ENCODE measurements at regions of chr2 and their contacts with region 1.

Region 1: GRCh38 chr2:208265801-208266552 is at the start of gene PIKFYVE:
- DNase-seq: peak; percentile 81 to 96 (median 90)
- ATAC-seq: peak; percentile 89
- H3K4me3 ChIP-seq: peak within 1 kb of the TSS; percentile 96
- H3K27ac ChIP-seq: peak within 1 kb of the TSS; percentile 77
- H3K4me1 ChIP-seq: peaks cover 4 to 7% of the 10 kb centered on the region in 2 experiments; a peak in 4 of 5 replicates
- H3K27me3 ChIP-seq: no peaks in the 10 kb centered on the region
- CTCF ChIP-seq: no peak
- EP300 ChIP-seq: peak; percentile 27
- POLR2A ChIP-seq: peak; percentile 79
- RAD21 ChIP-seq: no peak
- polyA plus RNA-seq, gene PIKFYVE: 3.6 to 3.7 TPM

Region 2: DNA sequence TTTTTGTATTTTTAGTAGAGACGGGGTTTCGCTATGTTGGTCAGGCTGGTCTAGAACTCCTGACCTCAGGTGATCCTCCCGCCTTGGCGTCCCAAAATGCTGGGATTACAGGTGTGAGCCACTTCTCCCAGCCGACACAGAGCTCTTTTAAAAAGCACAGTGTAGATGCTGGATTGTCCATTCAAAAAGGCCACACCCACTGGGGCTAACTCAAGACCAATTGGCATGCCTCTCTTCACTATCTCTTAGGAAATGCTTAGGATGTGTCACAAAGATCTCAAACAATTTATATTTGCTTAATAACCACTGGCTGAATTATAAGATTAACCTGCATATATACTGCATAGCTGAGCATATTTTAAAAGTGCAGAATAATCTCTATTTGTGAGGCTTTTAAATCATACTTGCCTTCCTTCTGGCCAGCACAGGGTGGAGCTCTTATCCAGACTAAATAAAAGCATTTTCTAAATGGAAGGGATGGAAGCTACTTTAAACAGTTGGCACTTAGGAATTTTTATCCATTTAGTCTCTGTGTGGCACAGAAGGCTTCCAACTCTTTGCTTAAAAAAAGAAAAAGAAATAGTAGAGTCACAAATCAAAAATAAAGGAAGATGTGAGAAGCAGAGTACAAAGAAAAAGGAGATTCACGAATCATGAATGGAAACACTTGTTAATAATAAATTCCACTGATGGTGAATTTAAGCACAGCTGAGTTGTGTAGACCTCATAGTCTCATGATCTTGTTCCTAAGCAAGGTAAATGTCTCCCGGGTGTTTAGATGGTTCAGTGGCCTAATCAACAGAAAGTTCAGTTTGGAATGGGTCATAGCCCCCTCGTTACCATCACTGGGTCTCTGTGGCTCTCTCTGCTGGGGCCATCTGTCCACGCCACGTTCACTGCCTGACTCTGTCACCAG is 164.0 kb before region 1 on chr2:
- CTCF ChIA-PET with region 1: no interaction called
- POLR2A ChIA-PET with region 1: no interaction called
- in situ Hi-C with region 1: no loop called
- intact Hi-C with region 1: loop called (anchors 5 kb)
- DNase-seq: peak in 2 of 4 experiments; percentile 9 to 13
- ATAC-seq: peak; percentile 79
- H3K4me3 ChIP-seq: no peak overlapping the region
- H3K27ac ChIP-seq: no peak overlapping the region
- H3K4me1 ChIP-seq: no peaks in the 10 kb centered on the region
- H3K27me3 ChIP-seq: 0 out of 5 replicates have a peak, but pooled peaks cover 0 to 4% of the 10 kb centered on the region in 2 experiments
- CTCF ChIP-seq: peak; percentile 14 to 62 (median 41); a peak in 5 of 6 replicates
- EP300 ChIP-seq: no peak
- POLR2A ChIP-seq: no peak
- RAD21 ChIP-seq: peak; percentile 56 to 64

Region 3: DNA sequence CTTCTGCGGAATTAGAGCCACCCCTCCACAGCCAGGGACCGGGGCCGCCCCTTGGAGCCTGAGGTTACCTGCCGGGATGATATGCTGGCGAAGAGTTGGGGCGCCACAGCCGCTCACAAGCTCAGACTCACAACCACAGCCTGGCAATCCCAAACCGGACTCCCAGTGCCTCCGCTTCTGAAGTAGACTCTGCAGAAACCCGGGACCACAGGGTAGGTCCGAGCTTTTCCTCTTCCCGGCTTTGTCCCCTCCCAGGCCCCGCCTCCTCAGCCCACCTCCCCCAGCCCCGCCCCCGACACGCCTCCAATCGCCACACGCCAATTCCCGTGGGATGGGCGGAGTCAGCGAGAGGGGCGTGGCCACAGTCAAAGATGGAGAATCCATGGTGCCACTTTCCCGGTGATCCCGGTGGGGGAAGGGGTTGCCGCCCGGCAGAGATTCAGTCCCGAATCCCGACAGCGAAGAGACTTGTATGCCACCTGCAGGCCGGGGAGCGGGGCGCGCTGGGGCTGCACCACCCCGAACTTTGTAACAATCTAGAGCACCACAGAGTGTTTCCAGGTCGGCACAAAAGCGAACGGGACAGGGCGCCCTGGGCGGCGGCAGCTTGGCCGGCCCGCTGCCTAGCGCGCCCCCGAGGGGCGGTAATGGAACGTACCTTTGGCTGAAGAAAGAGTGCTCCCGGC is 11.0 kb before region 1 on chr2 and contains the start of gene IDH1:
- CTCF ChIA-PET with region 1: interaction called, 4 read pairs
- POLR2A ChIA-PET with region 1: interaction called, 21 read pairs
- in situ Hi-C with region 1: no loop called
- intact Hi-C with region 1: loop called (anchors 1 kb)
- DNase-seq: peak; percentile 91 to 94 (median 92)
- ATAC-seq: peak; percentile 78
- H3K4me3 ChIP-seq: peak within 1 kb of the TSS; percentile 84
- H3K27ac ChIP-seq: peak within 1 kb of the TSS; percentile 80
- H3K4me1 ChIP-seq: peaks cover 8 to 13% of the 10 kb centered on the region in 2 experiments; a peak in 4 of 5 replicates
- H3K27me3 ChIP-seq: no peaks in the 10 kb centered on the region
- CTCF ChIP-seq: peak; percentile 59 to 66 (median 64)
- EP300 ChIP-seq: no peak
- POLR2A ChIP-seq: peak; percentile 65
- RAD21 ChIP-seq: peak; percentile 21 to 31; a peak in 3 of 4 replicates
- polyA plus RNA-seq, gene IDH1: 135 to 194 TPM

Measured in K562 (cell line).